Right ventricle myocardium inferior (tissue), 1 donor: ENCODE measurements at regions of chr16 and their contacts with region 1.

Region 1: GRCh38 chr16:69424053-69424934 is at the start of gene CYB5B:
- DNase-seq: peak; percentile 93
- ATAC-seq: peak; percentile 98
- total RNA-seq, gene CYB5B: 65.5 TPM

Region 2: DNA sequence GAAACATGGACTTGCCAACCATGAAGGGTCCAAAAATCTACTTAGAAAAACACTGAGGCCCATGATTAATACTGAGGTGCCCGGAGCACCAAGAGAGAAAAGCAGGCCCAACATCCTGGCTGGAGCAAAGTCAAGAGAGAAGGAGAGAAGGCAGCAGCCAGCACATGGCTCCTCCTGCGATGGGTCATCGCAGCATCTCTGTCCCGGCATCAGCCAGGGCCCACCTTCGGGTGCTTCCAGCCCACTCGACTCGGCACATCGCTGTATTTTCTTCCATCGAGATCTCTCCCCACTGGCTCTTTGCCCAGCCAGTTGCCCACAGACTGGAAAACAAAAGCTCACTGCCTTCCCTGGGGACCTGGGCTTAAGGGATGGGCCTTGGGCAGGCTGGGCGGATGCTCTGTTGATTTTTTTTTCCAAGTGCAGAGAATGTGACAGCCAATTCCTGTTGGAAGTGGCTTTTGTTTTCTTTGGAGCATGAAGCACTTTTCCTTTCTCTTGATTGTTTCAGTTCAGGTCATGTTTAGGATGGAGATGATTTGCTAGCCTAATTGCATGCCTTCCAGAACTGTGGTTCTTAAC is 58.2 kb after region 1 on chr16:
- intact Hi-C with region 1: loop called (anchors 1 kb)
- DNase-seq: peak; percentile 77
- ATAC-seq: peak; percentile 84

Region 3: DNA sequence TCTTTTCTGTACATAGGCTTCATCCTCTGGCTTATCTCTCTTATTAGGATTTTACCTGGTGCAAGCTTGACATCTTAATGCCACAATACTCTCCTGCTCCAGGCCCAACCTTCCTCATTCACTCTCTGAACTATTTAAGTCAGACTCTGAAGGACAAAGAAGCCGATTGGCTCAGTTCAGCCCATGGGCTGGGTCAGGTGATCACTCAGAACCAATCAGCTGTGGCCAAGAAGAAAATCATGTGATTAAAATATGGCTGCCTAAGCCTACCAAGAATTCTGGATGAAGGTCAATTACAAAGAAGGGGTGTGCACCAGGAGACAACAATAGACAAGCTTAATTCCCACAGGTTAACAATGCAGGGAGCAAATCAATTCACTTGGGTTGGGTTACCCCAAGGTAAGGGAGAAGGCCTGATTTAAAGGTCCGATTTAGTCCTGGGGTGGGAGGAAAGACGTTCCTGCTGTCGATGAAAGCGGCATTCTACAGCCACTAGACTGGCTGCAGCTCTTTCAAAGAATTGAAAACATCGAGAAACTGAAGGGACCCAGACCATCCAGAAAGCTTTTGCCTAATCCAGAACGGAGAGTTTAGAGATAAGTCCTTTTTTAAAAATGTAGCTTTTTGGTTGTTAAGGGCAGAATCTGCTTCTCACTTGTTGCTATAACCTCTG is 98.6 kb after region 1 on chr16:
- intact Hi-C with region 1: no loop called
- DNase-seq: no peak
- ATAC-seq: no peak